Activated naive CD4-positive, alpha-beta T cell treated with anti-CD3 and anti-CD28 coated beads for 36 hours (primary cell): ENCODE measurements at regions of chr4 and their contacts with region 1.

Region 1: GRCh38 chr4:112231779-112232713 is at the start of gene AP1AR:
- DNase-seq: peak; percentile 80
- H3K4me3 Mint-ChIP-seq: peak within 1 kb of the TSS; percentile 90
- H3K27ac Mint-ChIP-seq: peak within 1 kb of the TSS; percentile 98
- H3K4me1 Mint-ChIP-seq: peaks cover 32% of the 10 kb centered on the region
- H3K27me3 Mint-ChIP-seq: peaks cover under 1% of the 10 kb centered on the region
- total RNA-seq, gene AP1AR: 14.7 to 15.2 TPM

Region 2: DNA sequence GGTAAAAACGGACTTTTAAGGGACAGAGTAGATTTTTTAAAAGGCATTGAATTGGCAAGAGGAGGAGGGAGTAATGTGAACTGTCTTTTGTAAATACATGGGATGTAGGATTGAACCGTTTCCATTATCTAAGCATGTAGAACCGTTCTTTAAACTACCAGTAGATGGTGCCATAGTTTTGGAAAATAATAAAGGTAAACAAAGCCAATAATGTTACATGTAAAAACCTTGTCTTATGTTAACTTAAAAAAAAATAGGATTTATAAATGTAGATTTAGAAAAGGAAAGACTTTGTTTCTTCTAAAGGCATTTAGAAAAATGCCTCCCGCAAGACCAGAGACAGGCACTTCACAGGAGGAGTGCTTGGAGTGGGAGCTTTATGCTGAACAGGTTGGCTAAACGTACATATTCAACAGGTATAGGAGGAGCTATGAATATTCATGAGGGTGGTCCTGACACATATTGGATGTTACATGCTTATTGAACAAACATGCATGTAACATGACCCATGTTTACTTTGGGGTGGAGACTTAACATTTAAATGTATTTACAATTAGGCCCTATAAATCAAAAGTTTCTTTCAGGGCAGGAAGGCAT is 132.2 kb before region 1 on chr4:
- CTCF ChIA-PET with region 1: interaction called, 115 read pairs
- intact Hi-C with region 1: loop called (anchors 1 kb)
- DNase-seq: no peak
- H3K4me3 Mint-ChIP-seq: no peak overlapping the region
- H3K27ac Mint-ChIP-seq: no peak overlapping the region
- H3K4me1 Mint-ChIP-seq: peaks cover 5% of the 10 kb centered on the region
- H3K27me3 Mint-ChIP-seq: peaks cover 3% of the 10 kb centered on the region

Region 3: GRCh38 chr4:112184438-112184837 is 47.6 kb before region 1 on chr4:
- CTCF ChIA-PET with region 1: interaction called, 3 read pairs
- intact Hi-C with region 1: loop called (anchors 1 kb)
- DNase-seq: no peak
- H3K4me3 Mint-ChIP-seq: no peak overlapping the region
- H3K27ac Mint-ChIP-seq: no peak overlapping the region
- H3K4me1 Mint-ChIP-seq: peaks cover 39% of the 10 kb centered on the region
- H3K27me3 Mint-ChIP-seq: no peaks in the 10 kb centered on the region

Region 4: DNA sequence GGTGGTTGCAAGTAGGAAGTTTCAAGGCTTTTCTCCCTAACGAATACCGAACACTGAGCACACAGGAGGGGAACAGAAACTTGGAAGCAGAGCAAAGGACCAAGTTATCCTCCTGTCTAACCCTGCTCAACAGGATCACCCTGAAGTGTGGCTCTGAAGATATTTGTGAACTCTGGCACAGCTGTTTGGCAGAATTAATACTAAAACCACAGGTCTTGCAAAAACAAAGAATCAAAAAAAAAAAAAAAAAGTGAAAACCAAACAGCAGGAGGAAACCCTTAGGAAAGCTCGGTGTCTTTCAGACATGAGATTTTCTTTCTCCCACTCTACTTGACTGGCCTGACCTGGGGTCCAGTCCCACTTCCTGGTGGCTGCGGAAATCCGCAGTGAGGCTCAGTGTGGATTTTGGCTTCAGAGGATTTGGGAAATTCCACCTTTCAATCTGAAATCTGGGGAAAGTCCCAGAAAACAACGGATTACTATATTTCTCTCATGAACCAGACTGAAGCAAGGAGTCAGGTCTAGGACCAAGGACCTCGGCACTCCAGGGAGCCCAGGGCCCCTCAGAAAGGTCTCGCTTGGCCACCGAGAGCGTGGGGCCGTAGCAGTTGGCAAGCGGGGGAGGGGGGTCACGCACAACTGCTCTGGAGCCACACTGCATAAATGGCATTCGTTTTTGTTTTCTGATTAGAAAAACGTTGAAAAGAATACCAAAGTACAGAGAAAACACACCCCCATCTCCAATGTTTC is 52.8 kb after region 1 on chr4:
- CTCF ChIA-PET with region 1: interaction called, 6 read pairs
- intact Hi-C with region 1: loop called (anchors 1 kb)
- DNase-seq: no peak
- H3K4me3 Mint-ChIP-seq: peak overlapping the region; percentile 97
- H3K27ac Mint-ChIP-seq: peak overlapping the region; percentile 97
- H3K4me1 Mint-ChIP-seq: peaks cover 72% of the 10 kb centered on the region
- H3K27me3 Mint-ChIP-seq: no peaks in the 10 kb centered on the region

Region 5: DNA sequence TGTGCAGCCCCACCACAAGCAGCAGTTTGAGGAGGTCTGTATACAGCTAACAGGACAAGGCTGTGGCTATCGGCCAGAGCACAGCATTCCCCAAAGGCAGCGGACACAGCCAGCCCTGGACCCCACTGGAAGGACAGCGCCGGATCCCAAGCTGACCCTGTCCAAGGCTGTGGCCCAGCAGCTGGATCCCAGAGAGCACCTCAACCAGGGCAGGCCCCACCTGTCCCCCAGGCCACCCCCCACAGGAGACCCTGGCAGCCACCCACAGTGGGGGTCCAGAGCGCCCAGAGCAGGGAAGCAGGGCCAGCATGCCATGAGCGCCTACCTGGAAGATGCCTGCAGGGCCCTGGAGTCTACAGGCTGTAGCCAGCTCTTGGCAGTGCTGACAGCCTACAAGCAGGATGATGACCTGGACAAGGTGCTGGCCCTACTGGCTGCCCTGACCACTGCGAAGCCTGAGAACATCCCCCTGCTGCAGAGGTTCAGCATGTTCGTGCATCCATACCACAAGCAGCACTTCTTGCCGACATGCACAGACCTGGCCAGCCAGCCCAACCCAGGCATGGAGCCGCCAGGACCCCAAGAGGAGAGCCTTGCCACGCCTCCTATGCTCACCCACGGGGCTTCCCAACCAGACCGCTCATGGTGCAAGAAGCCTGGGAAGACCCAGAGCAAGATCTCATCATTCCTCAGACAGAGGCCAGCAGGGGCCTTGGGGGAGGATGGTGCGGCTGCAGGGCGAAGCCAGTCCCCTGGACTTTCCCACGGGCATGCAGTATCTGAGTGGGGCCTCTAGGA is 127.1 kb after region 1 on chr4:
- CTCF ChIA-PET with region 1: no interaction called
- intact Hi-C with region 1: no loop called
- DNase-seq: no peak
- H3K4me3 Mint-ChIP-seq: no peak overlapping the region
- H3K27ac Mint-ChIP-seq: no peak overlapping the region
- H3K4me1 Mint-ChIP-seq: peaks cover 2% of the 10 kb centered on the region
- H3K27me3 Mint-ChIP-seq: no peaks in the 10 kb centered on the region

Region 6: GRCh38 chr4:112515304-112516067 is 283.4 kb after region 1 on chr4:
- CTCF ChIA-PET with region 1: interaction called, 3 read pairs
- intact Hi-C with region 1: loop called (anchors 1 kb)
- DNase-seq: peak; percentile 66
- H3K4me3 Mint-ChIP-seq: peak overlapping the region; percentile 96
- H3K27ac Mint-ChIP-seq: no peak overlapping the region
- H3K4me1 Mint-ChIP-seq: peaks cover 38% of the 10 kb centered on the region
- H3K27me3 Mint-ChIP-seq: peaks cover 83% of the 10 kb centered on the region

Region 7: GRCh38 chr4:112765317-112765975 is 533.4 kb after region 1 on chr4:
- CTCF ChIA-PET with region 1: no interaction called
- intact Hi-C with region 1: loop called (anchors 10 kb)
- DNase-seq: no peak
- H3K4me3 Mint-ChIP-seq: no peak overlapping the region
- H3K27ac Mint-ChIP-seq: no peak overlapping the region
- H3K4me1 Mint-ChIP-seq: no peaks in the 10 kb centered on the region
- H3K27me3 Mint-ChIP-seq: peaks cover 3% of the 10 kb centered on the region